Psoas muscle (tissue), 8 donors: ENCODE measurements at regions of chr7 and their contacts with region 1.

Region 1: DNA sequence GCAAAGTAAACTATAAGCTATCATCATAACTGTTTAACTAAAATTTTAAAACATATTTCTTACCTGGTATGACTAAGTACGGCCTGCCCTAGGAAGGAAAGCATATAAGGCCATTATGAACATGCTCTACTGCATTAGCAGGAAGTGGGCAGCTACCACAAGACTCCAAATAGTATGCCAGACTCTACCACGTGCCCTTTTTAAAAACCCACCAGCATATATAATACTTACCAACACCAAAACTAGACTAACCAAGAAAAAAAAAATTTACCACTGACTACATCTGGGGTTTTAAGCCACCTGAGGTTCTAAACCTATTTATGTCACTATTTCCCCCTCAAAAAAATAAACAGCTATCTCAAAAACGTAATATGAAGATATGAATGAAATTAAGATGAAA is 30.1 kb downstream of the NUDCD3 start:
- DNase-seq: no peak
- ATAC-seq: no peak
- H3K4me3 ChIP-seq: no peak overlapping the region
- H3K27ac ChIP-seq: no peak overlapping the region
- H3K4me1 ChIP-seq: peaks cover 11% of the 10 kb centered on the region
- H3K27me3 ChIP-seq: no peaks in the 10 kb centered on the region
- CTCF ChIP-seq: no peak

Region 2: DNA sequence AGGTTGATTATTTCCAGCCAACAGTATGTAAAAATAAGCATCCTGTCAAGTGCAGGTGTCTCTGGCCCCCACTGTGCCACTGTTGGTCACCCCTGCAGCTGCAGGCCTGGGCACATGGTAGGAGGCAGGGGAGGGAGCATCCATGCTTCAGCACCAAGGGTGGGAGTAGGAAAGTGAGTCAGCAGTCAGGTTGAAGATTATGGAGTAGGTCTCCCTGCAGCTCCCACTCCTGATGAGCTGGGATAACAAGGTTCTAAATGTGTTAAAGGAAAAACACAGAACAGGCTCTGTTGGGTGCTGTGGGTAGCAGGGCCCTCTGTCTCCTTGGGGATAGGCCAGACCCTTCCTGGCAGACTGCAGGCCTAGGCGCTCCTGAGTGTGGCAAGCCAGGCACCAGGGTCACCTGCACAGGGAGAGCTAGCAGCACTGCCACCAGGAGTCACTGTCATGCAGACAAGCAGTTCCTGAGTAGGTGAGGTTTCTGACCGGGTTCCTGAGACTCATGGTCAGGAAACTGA is 29.2 kb before region 1 on chr7:
- intact Hi-C with region 1: loop called in 1 of 2 experiments (anchors 5 kb)
- DNase-seq: no peak
- ATAC-seq: peak; percentile 57 to 66 (median 58)
- H3K4me3 ChIP-seq: no peak overlapping the region
- H3K27ac ChIP-seq: peak overlapping the region; percentile 56
- H3K4me1 ChIP-seq: peaks cover 52% of the 10 kb centered on the region
- H3K27me3 ChIP-seq: no peaks in the 10 kb centered on the region
- CTCF ChIP-seq: peak; percentile 27